Endothelial cell of umbilical vein (primary cell): ENCODE measurements at regions of chr3 and their contacts with region 1.

Region 1: DNA sequence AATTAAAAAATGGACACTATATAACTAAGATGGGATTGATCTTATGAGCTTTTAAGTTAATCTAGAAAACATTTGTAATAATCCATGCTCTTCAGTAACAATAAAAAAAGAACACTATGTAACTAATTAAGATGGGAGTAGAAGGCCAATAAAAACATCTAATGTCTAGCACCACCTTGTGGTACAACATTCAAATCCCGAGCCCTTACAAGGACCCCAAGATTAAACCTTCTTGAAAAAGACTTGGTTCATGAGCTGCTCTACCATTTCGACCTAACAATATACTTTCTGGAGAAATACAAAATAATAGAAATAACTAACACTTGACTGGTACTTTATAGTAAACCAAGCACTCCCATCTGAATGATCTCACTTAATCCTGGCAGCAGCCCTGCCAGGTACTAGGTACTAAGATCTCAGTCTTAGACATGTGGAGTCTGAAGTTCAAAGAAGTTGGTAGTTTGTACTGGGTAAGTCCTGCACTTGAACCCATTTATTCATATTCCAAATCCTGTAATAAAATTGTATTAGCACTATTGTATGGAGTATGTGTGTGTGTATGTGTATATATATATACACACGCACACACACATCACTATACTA is 21.8 kb downstream of the METTL6 start:
- DNase-seq: peak; percentile 71
- H3K4me3 ChIP-seq: no peak overlapping the region
- H3K27ac ChIP-seq: no peak overlapping the region
- H3K4me1 ChIP-seq: no peaks in the 10 kb centered on the region
- H3K27me3 ChIP-seq: no peaks in the 10 kb centered on the region
- CTCF ChIP-seq: peak; percentile 49 to 50
- POLR2A ChIP-seq: no peak

Region 2: DNA sequence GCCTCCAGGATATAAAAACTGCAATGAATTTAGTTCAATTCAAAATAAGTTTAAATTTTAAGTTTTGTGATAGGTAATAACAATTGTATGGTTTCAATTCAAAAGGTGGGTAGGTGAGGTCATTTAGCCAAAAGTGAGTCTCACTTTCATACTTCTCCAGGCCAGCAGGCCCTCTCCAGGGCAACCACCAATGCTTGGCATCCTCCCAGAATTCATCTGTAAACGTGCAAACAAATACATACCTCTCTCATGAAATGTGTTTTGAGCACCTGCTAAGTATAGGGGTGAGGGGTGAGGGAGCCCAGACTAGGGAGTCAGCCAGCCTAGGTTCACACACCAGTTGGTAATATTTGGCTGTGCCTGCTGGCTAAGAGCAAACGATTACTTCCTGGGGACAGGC is 284.6 kb before region 1 on chr3:
- CTCF ChIA-PET with region 1: interaction called, 16 read pairs
- POLR2A ChIA-PET with region 1: no interaction called
- dilution Hi-C with region 1: no loop called
- intact Hi-C with region 1: no loop called
- DNase-seq: no peak
- H3K4me3 ChIP-seq: no peak overlapping the region
- H3K27ac ChIP-seq: no peak overlapping the region
- H3K4me1 ChIP-seq: no peaks in the 10 kb centered on the region
- H3K27me3 ChIP-seq: no peaks in the 10 kb centered on the region
- CTCF ChIP-seq: no peak
- POLR2A ChIP-seq: no peak

Region 3: DNA sequence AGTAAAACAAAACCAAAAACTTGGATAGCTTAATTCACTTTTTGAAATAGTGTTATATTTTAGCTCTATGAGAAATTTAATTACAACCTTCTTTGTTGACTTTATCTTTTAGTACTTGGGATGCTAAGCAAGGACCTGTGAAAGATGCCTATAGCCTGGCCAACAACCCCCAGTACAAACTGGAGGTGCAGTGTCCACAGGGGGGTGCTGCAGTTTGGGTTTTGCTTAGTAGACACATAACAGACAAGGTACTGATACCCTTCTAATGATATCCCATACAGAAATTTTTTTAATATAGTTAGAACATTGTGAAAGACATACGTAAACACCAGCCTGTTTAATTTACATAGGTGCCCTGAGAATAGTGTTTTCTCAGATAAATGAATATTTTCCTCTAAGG is 164.2 kb before region 1 on chr3:
- CTCF ChIA-PET with region 1: interaction called, 39 read pairs
- POLR2A ChIA-PET with region 1: no interaction called
- dilution Hi-C with region 1: no loop called
- intact Hi-C with region 1: loop called (anchors 1 kb)
- DNase-seq: peak; percentile 40
- H3K4me3 ChIP-seq: no peak overlapping the region
- H3K27ac ChIP-seq: no peak overlapping the region
- H3K4me1 ChIP-seq: no peaks in the 10 kb centered on the region
- H3K27me3 ChIP-seq: no peaks in the 10 kb centered on the region
- CTCF ChIP-seq: peak; percentile 29 to 33
- POLR2A ChIP-seq: no peak

Region 4: GRCh38 chr3:15276028-15276724 is 129.4 kb before region 1 on chr3:
- CTCF ChIA-PET with region 1: interaction called, 350 read pairs
- POLR2A ChIA-PET with region 1: no interaction called
- dilution Hi-C with region 1: no loop called
- intact Hi-C with region 1: no loop called
- DNase-seq: no peak
- H3K4me3 ChIP-seq: no peak overlapping the region
- H3K27ac ChIP-seq: peak overlapping the region; percentile 15
- H3K4me1 ChIP-seq: peaks cover 8% of the 10 kb centered on the region
- H3K27me3 ChIP-seq: no peaks in the 10 kb centered on the region
- CTCF ChIP-seq: no peak
- POLR2A ChIP-seq: no peak

Region 5: GRCh38 chr3:15384510-15385237 is 20.9 kb before region 1 on chr3:
- CTCF ChIA-PET with region 1: interaction called, 23 read pairs
- POLR2A ChIA-PET with region 1: no interaction called
- dilution Hi-C with region 1: no loop called
- intact Hi-C with region 1: no loop called
- DNase-seq: no peak
- H3K4me3 ChIP-seq: no peak overlapping the region
- H3K27ac ChIP-seq: no peak overlapping the region
- H3K4me1 ChIP-seq: peaks cover 14% of the 10 kb centered on the region
- H3K27me3 ChIP-seq: no peaks in the 10 kb centered on the region
- CTCF ChIP-seq: no peak
- POLR2A ChIP-seq: no peak

Region 6: GRCh38 chr3:15708882-15709677 is 303.5 kb after region 1 on chr3:
- CTCF ChIA-PET with region 1: no interaction called
- POLR2A ChIA-PET with region 1: no interaction called
- dilution Hi-C with region 1: no loop called
- intact Hi-C with region 1: no loop called
- DNase-seq: peak; percentile 39
- H3K4me3 ChIP-seq: no peak overlapping the region
- H3K27ac ChIP-seq: no peak overlapping the region
- H3K4me1 ChIP-seq: no peaks in the 10 kb centered on the region
- H3K27me3 ChIP-seq: no peaks in the 10 kb centered on the region
- CTCF ChIP-seq: no peak
- POLR2A ChIP-seq: no peak